BJ (cell line): ENCODE measurements at regions of chr12 and their contacts with region 1.

Region 1: DNA sequence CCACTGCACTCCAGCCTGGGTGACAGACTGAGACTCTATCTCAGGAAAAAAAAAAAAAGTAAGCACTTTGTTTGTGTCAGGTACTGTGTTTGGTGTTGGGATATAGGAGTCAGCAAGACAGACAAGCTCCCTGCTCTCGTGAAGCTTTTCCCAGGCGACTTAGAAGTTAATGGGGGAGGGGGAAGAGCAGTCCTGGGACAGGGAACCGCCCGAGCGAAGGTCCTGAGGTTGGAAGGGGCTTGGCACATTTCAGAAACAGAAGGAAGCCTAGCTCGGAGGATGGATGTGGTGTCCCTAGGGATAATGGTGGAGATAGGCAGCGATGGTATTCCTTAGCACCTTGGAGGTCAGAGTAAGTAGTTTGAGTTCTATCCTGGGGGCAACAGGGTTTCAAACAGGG is 8.5 kb upstream of the COX6A1 start:
- DNase-seq: no peak
- H3K4me3 ChIP-seq: no peak overlapping the region
- H3K27me3 ChIP-seq: no peaks in the 10 kb centered on the region; the same call in 1 of the 2 replicates
- CTCF ChIP-seq: no peak

Region 2: GRCh38 chr12:120356567-120357030 is 72.8 kb before region 1 on chr12:
- CTCF ChIA-PET with region 1: interaction called, 29 read pairs
- POLR2A ChIA-PET with region 1: no interaction called
- DNase-seq: peak; percentile 20
- H3K4me3 ChIP-seq: no peak overlapping the region
- H3K27me3 ChIP-seq: peaks cover 4% of the 10 kb centered on the region; the same call in 1 of the 2 replicates
- CTCF ChIP-seq: peak; percentile 89

Region 3: DNA sequence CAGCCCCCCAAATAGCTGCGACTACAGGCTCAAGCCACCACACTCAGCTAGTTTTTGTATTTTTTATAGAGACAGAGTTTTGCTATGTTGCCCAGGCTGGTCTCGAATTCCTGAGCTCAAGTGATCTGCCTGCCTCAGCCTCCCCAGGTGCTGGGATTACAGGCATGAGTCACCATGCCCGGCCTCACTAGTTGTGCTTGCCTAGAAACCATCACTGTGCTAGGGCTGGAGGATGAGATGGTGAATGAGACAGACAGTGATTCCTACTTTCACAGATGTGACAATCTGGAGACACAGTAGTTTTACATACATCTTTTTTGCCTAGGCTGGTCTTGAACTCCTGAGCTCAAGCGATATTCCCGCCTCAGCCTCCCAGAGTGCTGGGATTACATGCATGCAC is 53.0 kb before region 1 on chr12:
- CTCF ChIA-PET with region 1: interaction called, 10 read pairs
- POLR2A ChIA-PET with region 1: no interaction called
- DNase-seq: no peak
- H3K4me3 ChIP-seq: no peak overlapping the region
- H3K27me3 ChIP-seq: peaks cover 9% of the 10 kb centered on the region; the same call in 1 of the 2 replicates
- CTCF ChIP-seq: no peak

Region 4: DNA sequence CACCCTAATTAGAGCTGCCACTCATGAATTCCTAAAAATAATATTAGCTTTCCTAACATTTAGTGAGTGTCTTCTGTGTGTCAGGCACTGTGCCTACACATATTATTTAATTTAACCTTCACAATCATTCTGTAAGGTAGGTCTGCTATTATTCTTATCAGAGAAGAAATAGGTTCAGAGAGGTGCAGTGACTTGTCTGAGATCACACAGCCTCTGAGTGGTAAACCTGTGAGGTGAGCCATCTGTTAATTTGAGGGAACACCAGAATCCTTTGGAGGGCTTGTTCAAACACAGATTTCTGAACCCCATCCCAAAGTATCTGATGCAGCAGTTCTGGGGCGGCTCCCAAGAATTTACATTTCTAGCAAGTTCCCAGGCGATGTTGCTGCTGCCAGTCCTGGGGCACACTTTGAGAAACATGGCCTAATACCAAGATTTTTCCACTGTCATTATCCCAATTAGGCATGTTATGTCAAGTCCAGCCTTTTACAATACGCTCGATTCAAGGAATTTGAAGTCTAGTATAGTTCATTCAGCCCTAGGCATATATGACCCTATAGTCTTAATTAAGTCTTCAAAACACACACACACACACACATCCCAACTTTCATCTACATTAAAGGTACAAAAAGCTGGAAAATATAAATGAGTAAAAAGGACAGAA is 11.3 kb before region 1 on chr12:
- CTCF ChIA-PET with region 1: interaction called, 17 read pairs
- POLR2A ChIA-PET with region 1: no interaction called
- DNase-seq: no peak
- H3K4me3 ChIP-seq: no peak overlapping the region
- H3K27me3 ChIP-seq: no peaks in the 10 kb centered on the region
- CTCF ChIP-seq: no peak